PC-9 (cell line): ENCODE measurements at regions of chr1 and their contacts with region 1.

Region 1: GRCh38 chr1:224513787-224514209 is 79.2 kb upstream of the WDR26 start:
- DNase-seq: peak; percentile 71 to 92
- H3K4me3 ChIP-seq: no peak overlapping the region
- H3K27ac ChIP-seq: no peak overlapping the region
- H3K4me1 ChIP-seq: peaks cover 37% of the 10 kb centered on the region
- H3K27me3 ChIP-seq: no peaks in the 10 kb centered on the region
- CTCF ChIP-seq: peak; percentile 94

Region 2: GRCh38 chr1:224343679-224344078 is 170.1 kb before region 1 on chr1:
- CTCF ChIA-PET with region 1: no interaction called
- POLR2A ChIA-PET with region 1: no interaction called
- intact Hi-C with region 1: no loop called
- DNase-seq: no peak
- H3K4me3 ChIP-seq: no peak overlapping the region
- H3K27ac ChIP-seq: no peak overlapping the region
- H3K4me1 ChIP-seq: no peaks in the 10 kb centered on the region
- H3K27me3 ChIP-seq: no peaks in the 10 kb centered on the region
- CTCF ChIP-seq: no peak

Region 3: DNA sequence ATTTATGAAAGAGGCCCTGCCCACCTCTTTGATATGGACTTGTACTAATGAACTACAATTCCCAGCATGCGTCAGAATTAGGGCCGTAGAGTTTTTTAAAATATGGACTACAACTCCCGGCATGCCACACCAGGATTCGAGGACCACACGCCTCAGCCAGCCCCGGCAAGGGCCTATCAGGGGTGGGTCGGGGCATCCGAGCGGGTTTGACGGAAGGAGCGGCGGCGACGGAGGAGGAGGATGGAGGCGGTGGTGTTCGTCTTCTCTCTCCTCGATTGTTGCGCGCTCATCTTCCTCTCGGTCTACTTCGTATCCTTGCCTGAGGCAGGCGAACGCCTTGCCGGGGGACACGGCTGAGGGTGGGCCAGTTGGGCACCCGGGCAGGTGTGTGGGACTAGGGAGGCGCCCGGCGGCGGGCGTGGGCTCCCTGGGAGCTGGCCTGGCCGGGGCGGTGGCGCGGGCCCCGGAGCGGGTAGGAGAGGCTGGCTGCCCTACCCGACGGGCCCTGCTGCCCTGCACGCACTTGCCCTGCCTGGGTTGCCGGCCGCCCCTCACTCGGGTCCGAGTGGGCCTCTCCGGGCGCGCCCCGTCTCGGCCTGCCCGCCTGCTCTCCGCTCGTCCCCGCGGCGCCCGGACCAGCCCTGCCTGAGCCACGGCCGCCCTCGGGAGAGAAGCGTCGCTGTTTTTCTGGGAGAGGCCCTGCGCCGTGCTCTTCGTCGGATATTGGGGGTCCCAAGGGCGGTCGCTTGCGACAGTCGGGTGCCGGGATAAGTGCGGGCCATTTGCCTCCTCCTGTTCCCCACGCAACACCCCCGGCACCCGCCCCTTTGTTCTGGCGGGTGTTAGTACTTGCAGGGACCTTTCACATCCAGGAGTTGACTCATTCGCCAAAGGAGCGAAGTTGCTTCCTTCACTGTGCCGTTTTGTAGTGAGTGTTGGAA is 156.8 kb before region 1 on chr1 and contains the start of gene CNIH4:
- CTCF ChIA-PET with region 1: no interaction called
- POLR2A ChIA-PET with region 1: no interaction called
- intact Hi-C with region 1: no loop called
- DNase-seq: peak; percentile 92
- H3K4me3 ChIP-seq: peak within 1 kb of the TSS; percentile 64
- H3K27ac ChIP-seq: peak within 1 kb of the TSS; percentile 47
- H3K4me1 ChIP-seq: peaks cover 14% of the 10 kb centered on the region
- H3K27me3 ChIP-seq: no peaks in the 10 kb centered on the region
- CTCF ChIP-seq: no peak
- total RNA-seq, gene CNIH4: 86.2 and 93.8 TPM in 2 replicates

Region 4: GRCh38 chr1:224615861-224616755 is 102.3 kb after region 1 on chr1 and contains the start of gene CNIH3:
- CTCF ChIA-PET with region 1: no interaction called
- POLR2A ChIA-PET with region 1: no interaction called
- intact Hi-C with region 1: loop called (anchors 1 kb)
- DNase-seq: peak; percentile 75 to 83
- H3K4me3 ChIP-seq: peak within 1 kb of the TSS; percentile 87
- H3K27ac ChIP-seq: peak within 1 kb of the TSS; percentile 23; the same call in 1 of the 2 replicates
- H3K4me1 ChIP-seq: peaks cover 34% of the 10 kb centered on the region
- H3K27me3 ChIP-seq: no peaks in the 10 kb centered on the region
- CTCF ChIP-seq: no peak
- total RNA-seq, gene CNIH3: 7.4 and 8.4 TPM in 2 replicates

Region 5: DNA sequence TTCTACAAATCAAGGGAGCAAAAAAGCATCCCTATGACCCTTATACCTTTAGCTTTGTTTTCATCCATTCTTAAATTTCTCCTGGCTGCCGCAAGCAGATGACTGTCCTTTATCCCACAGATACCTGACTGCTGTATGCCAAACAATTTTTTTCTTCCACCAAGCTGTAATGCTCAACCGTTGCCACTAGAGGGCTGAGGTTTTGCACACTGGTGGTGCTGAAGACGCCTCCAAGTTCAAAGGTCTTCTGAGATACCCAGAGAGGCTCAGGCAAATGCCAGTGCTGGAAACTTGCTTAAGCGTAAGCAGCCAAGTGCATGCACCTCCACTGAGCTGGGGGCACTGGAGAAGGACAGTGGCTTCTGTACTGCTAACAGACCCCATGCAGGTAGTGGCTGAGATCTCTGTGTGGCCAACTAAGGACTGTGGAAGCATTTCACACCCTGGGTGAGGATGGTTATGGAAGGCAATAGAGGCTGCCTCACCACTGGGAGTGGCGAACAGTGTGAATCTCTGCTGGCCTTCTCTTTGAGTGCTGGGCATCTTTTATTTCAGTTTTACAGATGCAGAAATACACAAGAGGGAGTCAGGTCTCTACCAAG is 130.9 kb after region 1 on chr1:
- CTCF ChIA-PET with region 1: interaction called, 4 read pairs
- POLR2A ChIA-PET with region 1: no interaction called
- intact Hi-C with region 1: loop called (anchors 1 kb)
- DNase-seq: peak in 1 of 2 experiments; percentile 62
- H3K4me3 ChIP-seq: no peak overlapping the region
- H3K27ac ChIP-seq: no peak overlapping the region
- H3K4me1 ChIP-seq: no peaks in the 10 kb centered on the region
- H3K27me3 ChIP-seq: no peaks in the 10 kb centered on the region
- CTCF ChIP-seq: peak; percentile 96

Region 6: DNA sequence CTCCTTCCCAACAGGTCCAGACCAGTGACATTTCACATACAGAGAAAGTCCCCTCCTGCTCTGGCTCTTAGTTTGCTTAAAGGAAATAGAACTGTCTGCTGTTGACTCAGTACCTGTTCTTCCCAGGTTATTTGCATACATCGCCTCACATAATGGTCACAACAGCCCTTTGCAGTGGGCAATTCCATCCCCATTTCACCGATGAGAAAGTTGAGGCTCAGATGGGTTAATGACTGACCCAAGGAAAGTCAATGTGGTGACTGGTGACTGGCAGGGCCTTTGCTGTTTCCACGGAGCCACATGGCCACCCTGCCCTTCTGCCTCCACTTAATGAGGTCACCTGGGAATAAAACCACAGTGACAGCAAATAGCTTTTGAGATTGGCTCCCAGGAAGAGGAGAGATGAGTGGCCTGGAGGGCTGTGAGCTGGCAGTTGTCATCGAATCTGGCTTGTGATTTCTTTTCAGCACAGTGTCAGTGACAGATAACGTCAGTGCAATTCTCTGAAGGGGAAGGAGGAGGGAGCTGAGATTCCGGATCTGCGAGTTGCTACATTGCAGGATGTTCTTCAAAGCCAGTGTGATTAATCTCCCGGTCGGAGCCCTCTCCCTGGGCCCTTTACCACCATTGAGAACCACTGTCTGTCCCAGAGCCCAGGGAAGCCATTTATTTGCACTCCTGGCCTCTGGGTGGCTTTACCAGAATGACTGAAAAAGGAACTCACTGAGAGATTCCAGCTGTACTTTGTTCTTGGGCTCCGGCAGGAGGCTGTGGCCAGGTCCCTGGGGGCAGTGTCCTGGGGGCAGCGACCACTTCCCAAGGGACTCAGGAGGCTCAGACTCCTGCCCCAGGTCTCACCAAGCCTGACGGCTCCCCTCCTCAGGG is 219.5 kb after region 1 on chr1:
- CTCF ChIA-PET with region 1: no interaction called
- POLR2A ChIA-PET with region 1: no interaction called
- intact Hi-C with region 1: loop called (anchors 2 kb)
- DNase-seq: peak; percentile 73 to 94
- H3K4me3 ChIP-seq: peak overlapping the region; percentile 40; the same call in 1 of the 2 replicates
- H3K27ac ChIP-seq: peak overlapping the region; percentile 97
- H3K4me1 ChIP-seq: peaks cover 53% of the 10 kb centered on the region
- H3K27me3 ChIP-seq: no peaks in the 10 kb centered on the region
- CTCF ChIP-seq: no peak